A673 (cell line): ENCODE measurements at regions of chrX and their contacts with region 1.

Region 1: DNA sequence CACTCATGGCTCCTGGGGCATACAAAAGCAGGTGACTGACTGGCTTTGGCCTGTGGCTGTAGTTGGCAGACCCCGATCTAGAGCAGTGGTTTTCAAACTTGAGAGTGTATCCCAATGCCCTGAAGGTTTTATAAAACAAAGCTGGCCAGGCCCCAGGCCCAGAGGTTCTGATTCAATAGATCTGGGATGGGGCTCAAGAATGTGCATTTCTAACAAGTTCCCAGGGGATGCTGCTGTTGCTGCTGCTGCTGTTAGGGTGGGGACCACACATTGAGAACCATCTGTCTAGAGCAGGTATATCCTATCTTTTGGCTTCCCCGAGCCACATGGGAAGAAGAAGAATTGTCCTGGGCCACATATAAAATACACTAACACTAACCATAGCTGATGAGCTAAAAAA is 7.3 kb downstream of the AIFM1 start:
- DNase-seq: no peak
- H3K4me3 ChIP-seq: no peak overlapping the region
- H3K27ac ChIP-seq: no peak overlapping the region
- H3K4me1 ChIP-seq: no peaks in the 10 kb centered on the region
- H3K27me3 ChIP-seq: no peaks in the 10 kb centered on the region
- CTCF ChIP-seq: no peak

Region 2: GRCh38 chrX:130196466-130196865 is 38.2 kb after region 1 on chrX:
- CTCF ChIA-PET with region 1: no interaction called
- POLR2A ChIA-PET with region 1: no interaction called
- intact Hi-C with region 1: no loop called
- DNase-seq: no peak
- H3K4me3 ChIP-seq: no peak overlapping the region
- H3K27ac ChIP-seq: no peak overlapping the region
- H3K4me1 ChIP-seq: no peaks in the 10 kb centered on the region
- H3K27me3 ChIP-seq: no peaks in the 10 kb centered on the region
- CTCF ChIP-seq: no peak

Region 3: GRCh38 chrX:130330706-130331105 is 172.4 kb after region 1 on chrX:
- CTCF ChIA-PET with region 1: interaction called, 14 read pairs
- POLR2A ChIA-PET with region 1: no interaction called
- intact Hi-C with region 1: no loop called
- DNase-seq: peak; percentile 53
- H3K4me3 ChIP-seq: no peak overlapping the region
- H3K27ac ChIP-seq: no peak overlapping the region
- H3K4me1 ChIP-seq: no peaks in the 10 kb centered on the region
- H3K27me3 ChIP-seq: no peaks in the 10 kb centered on the region
- CTCF ChIP-seq: peak; percentile 70